ENCODE measurements at regions of chr22 and their contacts with region 1.

Region 1: DNA sequence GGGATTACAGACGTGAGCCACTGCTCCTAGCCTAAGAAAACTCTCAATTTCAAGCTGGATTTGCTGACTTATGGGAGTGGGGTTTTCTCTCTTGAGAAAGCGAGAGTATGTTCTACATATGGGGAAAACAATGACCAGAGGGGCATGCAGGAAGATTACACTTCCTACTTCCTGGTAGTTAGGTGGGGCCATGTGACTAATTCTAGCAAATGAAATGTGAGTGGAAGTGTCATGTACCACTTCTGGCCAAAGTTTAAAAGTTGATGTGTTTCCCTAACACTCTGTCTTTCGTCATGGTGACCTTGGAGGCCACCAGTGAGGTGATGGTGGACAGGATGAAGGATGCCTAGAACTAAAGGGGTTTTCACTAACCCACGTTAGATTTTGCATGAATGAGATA is 50.5 kb downstream of the PARVG start:
- DNase-seq: no peak
- H3K4me3 ChIP-seq: no peak overlapping the region
- H3K27ac ChIP-seq: no peak overlapping the region
- H3K27me3 ChIP-seq: no peaks in the 10 kb centered on the region
- CTCF ChIP-seq: no peak

Region 2: GRCh38 chr22:44242946-44243724 is 11.9 kb after region 1 on chr22:
- CTCF ChIA-PET with region 1: no interaction called
- POLR2A ChIA-PET with region 1: interaction called, 10 read pairs
- DNase-seq: no peak
- H3K4me3 ChIP-seq: no peak overlapping the region
- H3K27ac ChIP-seq: no peak overlapping the region
- H3K27me3 ChIP-seq: peaks cover 7% of the 10 kb centered on the region
- CTCF ChIP-seq: no peak

Measured in AG04450 (cell line).